ENCODE measurements at regions of chr20 and their contacts with region 1.

Region 1: DNA sequence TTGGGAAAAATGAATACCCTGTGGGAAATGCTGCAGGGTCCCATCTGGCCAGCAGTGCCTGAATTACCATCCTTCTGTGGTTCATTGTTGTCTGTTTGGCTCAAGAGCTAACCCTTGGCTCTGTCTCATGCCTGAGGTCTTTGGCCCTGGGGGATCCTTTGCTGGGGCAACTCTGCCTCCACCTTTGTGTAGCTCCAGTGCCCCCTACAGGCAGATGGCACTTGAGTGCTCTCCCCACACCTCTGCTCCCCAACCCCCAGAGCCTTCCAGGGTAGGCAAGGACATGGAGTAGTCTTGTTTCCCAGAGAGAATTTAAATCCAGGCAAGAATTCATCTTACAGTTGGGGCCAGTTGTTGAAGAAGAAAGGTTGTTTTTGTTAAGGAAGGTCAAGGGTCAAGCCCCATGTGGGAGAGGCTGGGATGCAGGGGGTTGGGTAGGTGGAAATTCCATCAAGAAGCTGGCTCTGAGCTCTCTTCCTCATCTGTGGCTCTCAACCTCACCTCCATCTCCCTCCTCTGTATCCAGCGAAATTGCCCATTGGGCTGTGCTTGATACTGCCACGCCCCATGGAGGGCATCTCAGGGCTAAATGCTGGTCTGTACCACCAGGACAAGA is 44.2 kb downstream of the ZNF831 start:
- DNase-seq: peak; percentile 88
- ATAC-seq: peak; percentile 96
- H3K4me3 Mint-ChIP-seq: no peak overlapping the region
- H3K27ac Mint-ChIP-seq: peak overlapping the region; percentile 72
- H3K4me1 Mint-ChIP-seq: peaks cover 28% of the 10 kb centered on the region
- H3K27me3 Mint-ChIP-seq: no peaks in the 10 kb centered on the region
- CTCF ChIP-seq: peak; percentile 87

Region 2: DNA sequence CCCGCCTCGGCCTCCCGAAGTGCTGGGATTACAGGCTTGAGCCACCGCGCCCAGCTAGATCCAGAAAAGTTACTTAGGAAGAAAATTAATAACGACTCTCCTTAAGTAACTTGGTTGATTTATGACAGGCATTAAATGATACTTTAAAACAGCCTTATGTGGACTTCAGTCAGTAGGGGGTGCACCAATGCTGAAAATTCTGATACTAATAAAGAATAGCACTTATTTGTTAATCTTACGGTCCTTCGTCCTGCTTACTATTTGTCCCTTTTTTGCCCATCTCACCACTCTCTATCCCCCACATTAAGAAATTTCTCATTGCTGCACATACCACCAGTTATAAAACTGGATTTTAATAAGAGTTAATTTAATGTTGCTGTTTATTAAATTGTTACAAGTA is 152.6 kb before region 1 on chr20:
- CTCF ChIA-PET with region 1: interaction called, 24 read pairs
- POLR2A ChIA-PET with region 1: no interaction called
- intact Hi-C with region 1: no loop called
- DNase-seq: peak; percentile 43
- ATAC-seq: no peak
- H3K4me3 Mint-ChIP-seq: no peak overlapping the region
- H3K27ac Mint-ChIP-seq: no peak overlapping the region
- H3K4me1 Mint-ChIP-seq: no peaks in the 10 kb centered on the region
- H3K27me3 Mint-ChIP-seq: peaks cover 21% of the 10 kb centered on the region
- CTCF ChIP-seq: peak; percentile 52

Region 3: DNA sequence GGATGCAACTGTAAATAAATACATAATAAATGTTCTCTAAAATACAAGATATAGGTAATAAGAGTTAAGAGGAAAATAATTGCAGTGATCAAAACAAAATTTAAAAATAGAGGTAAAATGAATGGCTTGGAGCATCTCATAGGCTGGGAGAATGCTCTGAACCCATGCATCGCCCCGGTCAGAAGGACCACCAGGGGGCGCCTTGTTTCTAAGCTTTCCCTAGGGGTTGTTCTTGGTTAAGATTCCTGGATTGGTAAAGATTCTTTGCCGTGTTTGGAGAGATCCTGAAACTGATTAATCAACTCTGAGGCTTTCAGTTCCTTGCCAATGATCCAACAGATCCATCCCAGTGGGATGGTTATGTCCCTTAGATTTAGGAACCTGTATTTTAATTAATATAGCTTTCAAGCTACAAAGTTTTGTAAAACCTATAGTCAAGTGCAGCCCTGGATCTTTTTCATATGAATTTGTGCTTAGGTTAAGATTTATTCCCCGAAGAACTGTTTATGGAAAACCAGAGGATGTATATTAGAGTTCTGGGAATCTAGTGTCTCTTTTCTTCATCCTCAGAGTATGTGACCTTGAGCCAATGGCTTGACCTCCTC is 119.9 kb before region 1 on chr20:
- CTCF ChIA-PET with region 1: interaction called, 234 read pairs
- POLR2A ChIA-PET with region 1: interaction called, 9 read pairs
- intact Hi-C with region 1: loop called (anchors 1 kb)
- DNase-seq: peak; percentile 93
- ATAC-seq: peak; percentile 75
- H3K4me3 Mint-ChIP-seq: no peak overlapping the region
- H3K27ac Mint-ChIP-seq: no peak overlapping the region
- H3K4me1 Mint-ChIP-seq: peaks cover 4% of the 10 kb centered on the region
- H3K27me3 Mint-ChIP-seq: no peaks in the 10 kb centered on the region
- CTCF ChIP-seq: peak; percentile 98

Region 4: GRCh38 chr20:59110607-59111006 is 97.2 kb before region 1 on chr20:
- CTCF ChIA-PET with region 1: interaction called, 12 read pairs
- POLR2A ChIA-PET with region 1: no interaction called
- intact Hi-C with region 1: no loop called
- DNase-seq: no peak
- ATAC-seq: no peak
- H3K4me3 Mint-ChIP-seq: no peak overlapping the region
- H3K27ac Mint-ChIP-seq: no peak overlapping the region
- H3K4me1 Mint-ChIP-seq: no peaks in the 10 kb centered on the region
- H3K27me3 Mint-ChIP-seq: no peaks in the 10 kb centered on the region
- CTCF ChIP-seq: no peak

Region 5: DNA sequence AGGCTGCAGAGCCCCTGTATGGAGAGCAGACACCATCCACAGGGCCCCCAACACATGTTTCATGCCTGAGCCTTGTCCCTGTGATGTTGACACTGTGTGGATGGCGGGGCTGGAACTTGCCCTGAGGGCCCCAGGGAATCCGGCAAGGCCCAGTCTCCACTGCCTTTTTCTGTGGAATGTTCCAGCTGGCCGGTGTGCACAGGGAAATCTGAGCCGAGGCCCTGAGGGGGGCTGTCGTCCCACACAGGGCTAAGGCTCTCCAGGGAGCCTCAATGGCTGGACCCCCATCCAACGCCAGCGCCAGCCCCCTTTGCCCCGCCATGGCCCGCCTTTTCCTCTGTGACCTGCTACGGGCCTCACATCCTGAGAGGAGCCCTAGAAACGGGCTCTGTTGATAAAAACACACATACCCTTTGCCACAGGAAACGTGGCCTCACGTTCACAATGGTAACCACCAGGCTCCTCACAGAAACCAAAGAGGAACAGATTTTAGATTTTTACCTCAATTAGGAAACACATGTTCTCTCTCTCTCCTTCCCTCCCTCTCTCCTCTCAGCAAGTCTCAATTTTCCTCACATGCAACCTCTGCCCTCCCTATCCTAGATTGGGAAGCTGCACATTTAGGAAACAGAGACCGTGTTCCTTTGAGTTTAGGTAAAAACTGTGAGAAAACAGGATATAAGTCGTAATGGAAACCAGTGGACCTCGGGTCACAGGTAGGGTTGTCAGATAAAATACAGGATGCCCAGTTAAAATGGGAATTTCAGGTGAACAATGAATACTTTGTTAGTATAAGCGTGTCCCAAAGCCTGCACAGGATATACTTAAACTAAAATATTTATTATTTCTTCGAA is 58.0 kb before region 1 on chr20:
- CTCF ChIA-PET with region 1: interaction called, 17 read pairs
- POLR2A ChIA-PET with region 1: no interaction called
- intact Hi-C with region 1: no loop called
- DNase-seq: peak; percentile 90
- ATAC-seq: peak; percentile 61
- H3K4me3 Mint-ChIP-seq: peak overlapping the region; percentile 54
- H3K27ac Mint-ChIP-seq: peak overlapping the region; percentile 95
- H3K4me1 Mint-ChIP-seq: peaks cover 85% of the 10 kb centered on the region
- H3K27me3 Mint-ChIP-seq: no peaks in the 10 kb centered on the region
- CTCF ChIP-seq: no peak

Region 6: GRCh38 chr20:59177261-59178250 is 30.3 kb before region 1 on chr20:
- CTCF ChIA-PET with region 1: interaction called, 27 read pairs
- POLR2A ChIA-PET with region 1: no interaction called
- intact Hi-C with region 1: no loop called
- DNase-seq: peak; percentile 70
- ATAC-seq: peak; percentile 90
- H3K4me3 Mint-ChIP-seq: peak overlapping the region; percentile 61
- H3K27ac Mint-ChIP-seq: peak overlapping the region; percentile 95
- H3K4me1 Mint-ChIP-seq: peaks cover 85% of the 10 kb centered on the region
- H3K27me3 Mint-ChIP-seq: no peaks in the 10 kb centered on the region
- CTCF ChIP-seq: no peak